ENCODE measurements at regions of chr2 and their contacts with region 1.

Region 1: DNA sequence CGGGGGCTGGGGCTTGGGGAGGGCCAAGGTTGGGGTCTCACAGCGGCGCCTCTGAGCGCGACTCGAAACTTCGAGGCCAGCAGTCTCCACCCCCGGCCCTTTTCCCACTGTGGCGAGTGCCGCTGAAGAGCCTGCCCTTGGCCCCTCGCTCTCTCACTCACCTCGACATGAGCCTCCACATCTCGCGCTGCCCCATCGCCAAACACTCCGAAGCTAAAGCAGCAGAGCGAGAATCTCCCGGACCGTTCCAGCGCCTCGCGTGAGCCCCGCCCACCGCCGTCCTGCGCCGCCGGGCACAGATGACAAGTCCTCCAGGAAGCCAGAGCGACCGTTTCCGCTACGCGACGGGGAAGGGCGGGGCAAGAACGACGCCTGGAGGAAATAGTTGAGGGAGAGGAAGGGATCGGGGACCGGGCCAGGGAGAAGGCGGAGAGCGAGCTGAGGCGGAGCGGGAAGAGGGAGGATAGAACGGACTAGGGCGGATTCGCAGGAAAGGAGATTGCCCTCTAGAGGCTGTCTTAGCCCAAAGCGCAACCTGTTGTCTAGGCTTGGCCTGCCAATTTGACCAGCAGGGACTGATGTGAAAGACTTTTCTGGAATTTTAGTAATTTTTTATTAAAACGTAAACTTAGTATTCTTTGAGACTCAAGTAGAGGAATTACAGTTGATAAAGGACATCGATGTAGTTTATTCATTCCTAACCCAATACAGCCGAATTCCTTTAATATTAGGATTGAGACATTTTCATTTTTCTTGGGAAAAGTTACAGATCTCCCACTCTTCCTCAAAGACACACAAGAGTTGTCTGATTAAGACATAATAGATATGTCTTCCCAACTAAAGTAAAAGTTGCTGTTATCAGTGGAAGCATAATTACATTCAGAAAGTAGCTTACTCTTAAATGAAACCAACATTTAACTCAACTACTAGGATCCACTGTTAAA is at the start of gene HIBCH:
- DNase-seq: peak; percentile 94
- H3K4me3 Mint-ChIP-seq: peak within 1 kb of the TSS; percentile 91
- H3K27ac Mint-ChIP-seq: peak within 1 kb of the TSS; percentile 88
- H3K4me1 Mint-ChIP-seq: peaks cover 39% of the 10 kb centered on the region
- H3K27me3 Mint-ChIP-seq: no peaks in the 10 kb centered on the region
- total RNA-seq, gene HIBCH: 19.2 TPM

Region 2: DNA sequence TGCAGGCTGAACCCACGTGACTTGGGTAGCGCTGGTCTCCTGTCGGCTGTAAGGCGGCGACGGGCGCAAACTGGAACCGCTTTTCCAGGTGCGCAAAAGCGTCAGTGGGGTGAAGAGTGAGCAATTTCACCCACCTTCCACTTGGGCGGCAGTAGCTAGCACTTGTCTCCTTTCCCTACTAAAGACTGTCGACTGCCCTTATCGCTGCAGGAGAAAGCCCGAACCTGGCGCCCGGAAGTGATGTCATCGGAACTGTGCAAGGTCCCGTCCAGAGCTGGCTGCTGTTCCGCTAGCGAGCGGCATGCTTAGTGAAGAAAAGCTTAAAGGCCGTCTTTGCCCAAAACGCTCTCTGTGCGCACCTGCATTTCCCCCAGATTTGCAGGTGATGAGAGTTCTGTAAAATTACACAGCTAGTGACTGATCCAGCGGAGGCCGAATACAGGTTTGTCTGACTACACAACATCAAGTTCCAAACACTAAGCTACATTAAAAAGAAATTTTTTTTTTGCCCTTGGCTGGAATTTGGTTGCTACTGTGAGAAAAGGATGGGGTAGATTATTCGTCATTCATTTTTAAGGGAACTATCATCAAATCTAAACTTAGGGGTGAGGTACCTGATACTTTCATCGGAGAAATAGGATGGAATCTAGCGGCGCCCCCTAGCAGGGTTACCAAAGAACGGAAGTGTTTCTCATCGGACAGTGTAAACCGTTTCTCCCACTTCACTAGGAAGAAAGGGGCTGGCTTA is 557.1 kb before region 1 on chr2 and contains the start of gene OSGEPL1:
- CTCF ChIA-PET with region 1: no interaction called
- intact Hi-C with region 1: loop called (anchors 1 kb)
- DNase-seq: peak; percentile 95
- H3K4me3 Mint-ChIP-seq: peak within 1 kb of the TSS; percentile 92
- H3K27ac Mint-ChIP-seq: peak within 1 kb of the TSS; percentile 97
- H3K4me1 Mint-ChIP-seq: peaks cover 13% of the 10 kb centered on the region
- H3K27me3 Mint-ChIP-seq: no peaks in the 10 kb centered on the region
- total RNA-seq, gene OSGEPL1: 15.5 to 15.8 TPM

Region 3: GRCh38 chr2:190343500-190344275 is 23.9 kb after region 1 on chr2 and contains the start of gene INPP1:
- CTCF ChIA-PET with region 1: interaction called, 3 read pairs
- intact Hi-C with region 1: loop called (anchors 1 kb)
- DNase-seq: peak; percentile 52
- H3K4me3 Mint-ChIP-seq: peak within 1 kb of the TSS; percentile 80
- H3K27ac Mint-ChIP-seq: peak within 1 kb of the TSS; percentile 72
- H3K4me1 Mint-ChIP-seq: peaks cover 11% of the 10 kb centered on the region
- H3K27me3 Mint-ChIP-seq: peaks cover 2% of the 10 kb centered on the region
- total RNA-seq, gene INPP1: 6.3 to 7.0 TPM

Region 4: DNA sequence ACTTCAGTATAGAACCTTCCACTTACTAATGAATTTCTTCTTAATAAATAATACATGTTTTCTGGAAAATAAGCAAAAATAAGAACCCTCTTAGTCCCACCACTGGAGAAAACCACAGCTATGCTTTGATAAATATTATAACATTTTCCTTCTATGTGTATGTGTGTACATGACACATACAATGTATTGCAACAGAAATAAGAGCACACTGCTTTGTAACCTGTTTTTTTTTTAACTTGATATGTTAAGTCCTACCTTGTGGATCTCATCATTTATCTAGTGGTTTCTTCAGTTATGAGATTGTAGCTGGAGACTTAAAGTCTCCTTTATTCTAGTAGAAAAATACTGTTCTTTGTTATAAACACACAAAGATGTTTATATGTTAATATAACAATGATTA is 40.7 kb after region 1 on chr2:
- CTCF ChIA-PET with region 1: interaction called, 3 read pairs
- intact Hi-C with region 1: loop called (anchors 1 kb)
- DNase-seq: no peak
- H3K4me3 Mint-ChIP-seq: peak overlapping the region; percentile 79
- H3K27ac Mint-ChIP-seq: no peak overlapping the region
- H3K4me1 Mint-ChIP-seq: peaks cover 23% of the 10 kb centered on the region
- H3K27me3 Mint-ChIP-seq: no peaks in the 10 kb centered on the region

Region 5: GRCh38 chr2:190376591-190377245 is 56.9 kb after region 1 on chr2:
- CTCF ChIA-PET with region 1: no interaction called
- intact Hi-C with region 1: loop called (anchors 1 kb)
- DNase-seq: no peak
- H3K4me3 Mint-ChIP-seq: no peak overlapping the region
- H3K27ac Mint-ChIP-seq: no peak overlapping the region
- H3K4me1 Mint-ChIP-seq: no peaks in the 10 kb centered on the region
- H3K27me3 Mint-ChIP-seq: no peaks in the 10 kb centered on the region

Region 6: GRCh38 chr2:190408538-190409271 is 88.9 kb after region 1 on chr2:
- CTCF ChIA-PET with region 1: interaction called, 3 read pairs
- intact Hi-C with region 1: loop called (anchors 1 kb)
- DNase-seq: peak; percentile 71
- H3K4me3 Mint-ChIP-seq: peak overlapping the region; percentile 84
- H3K27ac Mint-ChIP-seq: peak overlapping the region; percentile 90
- H3K4me1 Mint-ChIP-seq: peaks cover 46% of the 10 kb centered on the region
- H3K27me3 Mint-ChIP-seq: no peaks in the 10 kb centered on the region

Measured in activated naive CD4-positive, alpha-beta T cell treated with anti-CD3 and anti-CD28 coated beads for 36 hours (primary cell).